ENCODE measurements at regions of chr9 and their contacts with region 1.

Region 1: GRCh38 chr9:33374634-33375213 is 27.6 kb downstream of the AQP7 start:
- DNase-seq: peak in 3 of 4 donors; percentile 66 to 85 (median 77)
- ATAC-seq: peak; percentile 93
- H3K4me3 ChIP-seq: no peak overlapping the region
- H3K27ac ChIP-seq: peak overlapping the region in 1 of 2 donors; percentile 46
- H3K4me1 ChIP-seq: peaks cover 0 to 18% of the 10 kb centered on the region in 2 donors
- H3K27me3 ChIP-seq: no peaks in the 10 kb centered on the region
- CTCF ChIP-seq: peak; percentile 79 to 81

Region 2: DNA sequence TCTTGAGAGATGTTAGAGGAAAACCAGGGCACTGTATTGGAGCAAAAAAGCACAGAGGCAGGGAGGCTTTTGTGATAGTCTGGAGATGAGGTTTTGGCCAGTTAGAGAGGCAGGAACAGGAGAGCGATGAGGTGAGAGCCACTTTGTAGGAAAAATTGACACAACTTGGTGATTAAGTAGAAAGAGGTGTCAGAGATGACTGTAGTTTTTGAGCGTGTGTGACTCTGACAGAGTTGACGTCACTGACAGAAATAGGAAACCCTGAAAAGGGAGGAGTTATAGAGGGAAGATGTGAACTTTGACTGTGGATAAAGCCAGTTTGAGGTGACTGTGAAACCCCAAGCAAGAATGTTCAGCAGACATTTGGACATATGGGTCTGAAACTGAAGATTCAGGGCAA is 68.7 kb before region 1 on chr9:
- intact Hi-C with region 1: no loop called
- DNase-seq: no peak
- ATAC-seq: no peak
- H3K4me3 ChIP-seq: no peak overlapping the region
- H3K27ac ChIP-seq: no peak overlapping the region
- H3K4me1 ChIP-seq: no peaks in the 10 kb centered on the region
- H3K27me3 ChIP-seq: no peaks in the 10 kb centered on the region
- CTCF ChIP-seq: no peak

Region 3: DNA sequence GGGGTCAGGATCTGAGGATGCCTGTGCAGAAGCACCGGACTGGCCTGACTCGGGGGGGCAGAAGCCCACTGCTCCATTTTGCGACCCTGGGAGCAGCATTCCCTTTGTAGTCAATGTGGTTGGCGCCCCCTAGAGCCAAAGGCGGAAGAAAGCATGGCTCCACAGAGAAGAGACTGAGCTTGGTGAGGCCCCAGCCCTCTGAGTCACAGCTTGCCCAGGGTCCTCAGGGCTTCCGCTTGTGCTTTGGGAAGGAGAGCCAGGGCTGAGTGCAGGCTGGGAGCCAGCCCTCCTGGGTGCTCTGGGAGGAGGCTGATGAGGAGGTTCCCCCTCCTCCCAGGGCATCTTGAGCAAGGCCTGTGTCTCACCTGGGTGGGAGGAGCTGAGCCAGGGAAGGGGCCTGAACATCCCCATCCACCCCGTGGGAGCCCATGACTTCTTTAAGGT is 78.1 kb after region 1 on chr9:
- intact Hi-C with region 1: loop called in 1 of 2 experiments (anchors 10 kb)
- DNase-seq: peak in 3 of 4 donors; percentile 62 to 86 (median 84)
- ATAC-seq: peak; percentile 93
- H3K4me3 ChIP-seq: no peak overlapping the region
- H3K27ac ChIP-seq: no peak overlapping the region
- H3K4me1 ChIP-seq: peaks cover 4 to 19% of the 10 kb centered on the region in 2 donors
- H3K27me3 ChIP-seq: peaks cover 0 to 6% of the 10 kb centered on the region in 2 donors
- CTCF ChIP-seq: peak; percentile 65 to 69

Region 4: DNA sequence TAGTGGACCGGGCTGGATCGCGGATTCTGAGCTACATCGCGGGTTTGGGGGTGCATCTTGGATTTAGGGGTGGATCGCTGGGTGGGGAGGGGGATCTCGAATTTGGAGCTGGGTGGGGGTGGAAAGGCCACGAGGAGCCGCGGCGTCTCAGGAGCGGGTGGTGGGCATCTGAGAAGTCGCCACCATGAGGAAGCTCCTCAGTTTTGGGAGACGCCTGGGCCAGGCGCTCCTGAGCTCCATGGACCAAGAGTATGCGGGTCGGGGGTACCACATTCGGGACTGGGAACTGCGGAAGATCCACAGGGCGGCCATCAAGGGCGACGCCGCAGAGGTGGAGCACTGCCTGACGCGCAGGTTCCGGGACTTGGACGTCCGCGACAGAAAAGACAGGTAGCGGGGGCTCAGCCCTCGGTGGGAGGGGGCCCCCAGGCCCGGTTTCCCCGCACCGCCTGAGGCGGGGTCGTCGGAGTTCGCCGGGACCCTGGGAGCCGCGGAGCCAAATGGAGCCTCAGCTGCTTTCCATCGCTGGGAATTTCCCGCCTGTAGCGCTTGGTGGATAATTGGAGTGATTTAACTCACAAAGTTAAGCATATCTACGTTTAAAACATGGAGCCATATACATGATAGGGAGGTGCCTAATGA is 149.7 kb after region 1 on chr9:
- intact Hi-C with region 1: no loop called
- DNase-seq: no peak
- ATAC-seq: peak; percentile 49
- H3K4me3 ChIP-seq: no peak overlapping the region
- H3K27ac ChIP-seq: no peak overlapping the region
- H3K4me1 ChIP-seq: peaks cover 0 to 12% of the 10 kb centered on the region in 2 donors
- H3K27me3 ChIP-seq: peaks cover 45 to 88% of the 10 kb centered on the region in 2 donors
- CTCF ChIP-seq: no peak

Region 5: DNA sequence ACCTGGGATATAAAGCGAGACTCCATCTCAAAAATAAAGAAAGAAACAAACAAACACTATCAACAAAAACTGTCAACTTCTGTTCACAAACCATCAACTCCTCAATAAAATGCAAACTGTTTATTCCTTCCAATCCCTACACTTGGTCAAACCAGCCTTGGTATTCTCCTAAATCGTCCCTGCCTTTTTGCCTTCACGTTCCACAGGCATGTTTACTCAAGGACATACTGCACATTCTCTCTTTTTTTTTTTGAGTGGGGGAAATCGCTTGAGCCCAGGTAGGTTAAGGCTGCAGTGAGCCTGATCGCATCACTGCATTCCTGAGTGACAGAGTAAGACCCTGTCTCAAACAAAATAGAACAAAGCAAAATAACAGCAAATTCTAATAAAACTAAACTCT is 660.9 kb after region 1 on chr9:
- intact Hi-C with region 1: no loop called
- DNase-seq: no peak
- ATAC-seq: peak; percentile 53
- H3K4me3 ChIP-seq: no peak overlapping the region
- H3K27ac ChIP-seq: no peak overlapping the region
- H3K4me1 ChIP-seq: peaks cover 0 to 4% of the 10 kb centered on the region in 2 donors
- H3K27me3 ChIP-seq: no peaks in the 10 kb centered on the region
- CTCF ChIP-seq: no peak

Measured in left lung (tissue), 14 donors.